Heart left ventricle (tissue), 16 donors: ENCODE measurements at regions of chr6 and their contacts with region 1.

Region 1: DNA sequence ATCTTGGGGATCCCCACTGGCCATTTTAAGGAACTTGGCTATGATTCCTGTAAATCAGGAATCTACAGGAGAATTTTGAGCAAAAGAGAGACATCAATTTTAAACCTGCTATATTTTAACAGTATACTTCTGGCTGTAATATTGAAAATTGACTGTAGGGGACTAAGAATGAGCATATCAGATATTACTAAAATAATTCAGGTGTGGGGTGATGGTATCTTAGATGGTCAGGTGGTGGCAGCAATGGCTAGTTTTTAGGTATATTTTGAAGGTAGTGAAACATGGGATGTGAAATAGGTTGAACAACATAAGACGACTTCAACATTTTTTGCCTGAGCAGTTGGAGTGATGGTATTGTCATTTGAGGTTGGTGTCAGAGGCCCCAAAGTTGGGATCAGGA is 32.1 kb downstream of the FAM83B start:
- DNase-seq: no peak
- ATAC-seq: no peak
- H3K4me3 ChIP-seq: no peak overlapping the region
- H3K27ac ChIP-seq: no peak overlapping the region
- H3K4me1 ChIP-seq: no peaks in the 10 kb centered on the region
- H3K27me3 ChIP-seq: no peaks in the 10 kb centered on the region
- CTCF ChIP-seq: no peak
- POLR2A ChIP-seq: no peak

Region 2: DNA sequence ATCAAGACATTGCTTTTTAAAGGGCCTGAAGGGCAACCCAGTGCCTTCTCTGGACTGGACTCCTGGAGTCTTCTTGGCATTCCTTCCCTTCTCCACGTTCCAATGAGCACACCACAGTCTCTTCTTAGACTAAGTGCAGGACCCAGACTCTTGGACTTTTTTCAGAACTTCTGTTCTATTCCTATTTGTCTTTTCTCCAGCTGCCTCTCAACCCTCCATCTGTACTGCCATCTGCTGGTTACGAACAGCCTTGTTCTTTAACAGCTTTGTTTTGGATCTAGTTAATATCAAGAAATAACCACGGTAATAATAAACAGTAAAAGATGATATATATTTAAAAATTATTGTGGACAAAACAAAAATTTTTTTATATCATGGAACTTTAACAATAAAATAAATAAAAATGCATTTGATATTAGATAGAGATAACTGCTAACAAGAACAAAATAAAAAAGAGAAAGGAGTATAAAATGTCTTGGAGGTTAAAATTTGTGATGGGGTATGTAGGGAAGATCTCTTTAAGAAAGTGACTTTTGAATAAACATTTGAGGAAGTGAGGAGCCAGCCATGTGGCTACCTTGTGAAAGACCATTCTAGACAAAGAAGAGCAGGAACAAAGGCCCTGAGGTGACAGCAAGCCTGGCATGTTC is 190.6 kb after region 1 on chr6:
- intact Hi-C with region 1: loop called in 1 of 10 experiments (anchors 5 kb)
- DNase-seq: no peak
- ATAC-seq: peak in 2 of 4 donors; percentile 38 to 39
- H3K4me3 ChIP-seq: no peak overlapping the region
- H3K27ac ChIP-seq: no peak overlapping the region
- H3K4me1 ChIP-seq: peaks cover 0 to 5% (median 0%) of the 10 kb centered on the region in 12 donors
- H3K27me3 ChIP-seq: no peaks in the 10 kb centered on the region
- CTCF ChIP-seq: peak; percentile 34 to 65 (median 51)
- POLR2A ChIP-seq: no peak